HepG2 (cell line): ENCODE measurements at regions of chr5 and their contacts with region 1.

Region 1: DNA sequence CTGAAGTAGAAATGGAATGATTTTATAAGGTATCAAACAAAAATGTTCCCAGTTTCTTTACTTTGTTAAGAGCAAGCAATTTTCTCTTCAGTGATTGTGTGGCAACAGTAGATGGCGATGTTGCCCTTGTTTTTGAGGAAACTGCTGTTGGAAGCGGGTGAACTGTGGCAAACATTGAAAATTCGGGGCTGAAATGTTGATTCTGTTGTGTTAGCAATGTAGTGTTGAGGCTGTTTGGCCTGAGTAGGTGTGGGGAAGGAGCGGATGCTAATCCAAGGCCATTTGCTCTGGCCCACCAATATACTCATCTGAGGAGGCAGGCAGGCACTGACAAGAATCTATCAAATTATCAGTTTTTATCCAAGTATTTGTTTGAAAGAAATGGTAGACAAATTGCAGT is 129.8 kb downstream of the SLC12A2 start:
- DNase-seq: peak; percentile 39
- ATAC-seq: peak; percentile 67
- H3K4me3 ChIP-seq: no peak overlapping the region
- H3K27ac ChIP-seq: no peak overlapping the region
- H3K4me1 ChIP-seq: peaks cover 14% of the 10 kb centered on the region
- H3K27me3 ChIP-seq: peaks cover 0 to 6% of the 10 kb centered on the region in 2 experiments; a peak in 2 of 5 replicates
- CTCF ChIP-seq: peak; percentile 82
- EP300 ChIP-seq: no peak
- POLR2A ChIP-seq: no peak
- RAD21 ChIP-seq: peak; percentile 62; the same call in 1 of the 2 replicates

Region 2: GRCh38 chr5:127536687-127537086 is 676.7 kb before region 1 on chr5:
- CTCF ChIA-PET with region 1: no interaction called
- POLR2A ChIA-PET with region 1: no interaction called
- in situ Hi-C with region 1: no loop called
- intact Hi-C with region 1: no loop called
- DNase-seq: no peak
- ATAC-seq: no peak
- H3K4me3 ChIP-seq: no peak overlapping the region
- H3K27ac ChIP-seq: no peak overlapping the region
- H3K4me1 ChIP-seq: no peaks in the 10 kb centered on the region
- H3K27me3 ChIP-seq: no peaks in the 10 kb centered on the region
- CTCF ChIP-seq: no peak
- EP300 ChIP-seq: no peak
- POLR2A ChIP-seq: no peak
- RAD21 ChIP-seq: no peak

Region 3: GRCh38 chr5:128228008-128228407 is 14.7 kb after region 1 on chr5:
- CTCF ChIA-PET with region 1: no interaction called
- POLR2A ChIA-PET with region 1: no interaction called
- in situ Hi-C with region 1: no loop called
- intact Hi-C with region 1: no loop called
- DNase-seq: no peak
- ATAC-seq: no peak
- H3K4me3 ChIP-seq: no peak overlapping the region
- H3K27ac ChIP-seq: no peak overlapping the region
- H3K4me1 ChIP-seq: no peaks in the 10 kb centered on the region
- H3K27me3 ChIP-seq: no peaks in the 10 kb centered on the region
- CTCF ChIP-seq: no peak
- EP300 ChIP-seq: no peak
- POLR2A ChIP-seq: no peak
- RAD21 ChIP-seq: no peak

Region 4: GRCh38 chr5:128362370-128362769 is 149.0 kb after region 1 on chr5:
- CTCF ChIA-PET with region 1: no interaction called
- POLR2A ChIA-PET with region 1: no interaction called
- in situ Hi-C with region 1: no loop called
- intact Hi-C with region 1: no loop called
- DNase-seq: no peak
- ATAC-seq: no peak
- H3K4me3 ChIP-seq: no peak overlapping the region
- H3K27ac ChIP-seq: no peak overlapping the region
- H3K4me1 ChIP-seq: 0 out of 2 replicates have a peak, but pooled peaks cover 7% of the 10 kb centered on the region
- H3K27me3 ChIP-seq: no peaks in the 10 kb centered on the region
- CTCF ChIP-seq: no peak
- EP300 ChIP-seq: no peak
- POLR2A ChIP-seq: no peak
- RAD21 ChIP-seq: no peak

Region 5: GRCh38 chr5:128498844-128499455 is 285.6 kb after region 1 on chr5:
- CTCF ChIA-PET with region 1: interaction called, 12 read pairs
- POLR2A ChIA-PET with region 1: no interaction called
- in situ Hi-C with region 1: loop called (anchors 5 kb)
- intact Hi-C with region 1: loop called (anchors 1 kb)
- DNase-seq: no peak
- ATAC-seq: no peak
- H3K4me3 ChIP-seq: no peak overlapping the region
- H3K27ac ChIP-seq: no peak overlapping the region
- H3K4me1 ChIP-seq: no peaks in the 10 kb centered on the region
- H3K27me3 ChIP-seq: no peaks in the 10 kb centered on the region
- CTCF ChIP-seq: peak; percentile 22; the same call in 1 of the 2 replicates
- EP300 ChIP-seq: no peak
- POLR2A ChIP-seq: no peak
- RAD21 ChIP-seq: no peak

Region 6: DNA sequence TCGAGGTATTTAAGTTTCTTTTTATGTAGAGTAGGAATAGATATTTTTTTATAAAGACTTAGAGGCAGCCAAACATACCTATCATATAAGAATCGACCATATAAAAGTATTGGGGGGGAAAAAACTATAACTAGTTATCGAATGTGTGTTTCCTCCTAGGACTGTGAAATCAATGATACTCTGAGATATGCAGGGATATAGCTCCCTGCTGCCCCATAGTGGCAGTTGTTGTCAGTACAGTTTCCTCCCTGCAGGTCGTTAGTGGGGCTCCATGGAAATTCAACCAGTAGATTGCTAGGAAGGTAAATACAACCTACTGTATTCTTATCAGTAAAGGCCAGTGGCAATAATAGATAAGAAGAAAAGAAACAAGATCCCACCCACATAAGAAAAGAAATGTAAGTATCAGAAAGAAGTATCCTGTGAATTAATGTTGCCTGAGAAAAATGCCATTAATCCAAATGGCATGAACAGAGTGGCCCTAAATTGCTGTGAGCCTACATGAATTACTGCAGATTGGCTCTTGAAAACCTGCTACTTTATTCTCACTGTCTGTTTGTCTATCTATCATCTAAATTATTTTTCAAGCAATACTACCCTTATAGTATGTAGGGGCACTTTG is 461.6 kb after region 1 on chr5:
- CTCF ChIA-PET with region 1: interaction called, 12 read pairs
- POLR2A ChIA-PET with region 1: no interaction called
- in situ Hi-C with region 1: loop called (anchors 10 kb)
- intact Hi-C with region 1: loop called (anchors 1 kb)
- DNase-seq: peak; percentile 14
- ATAC-seq: peak; percentile 88
- H3K4me3 ChIP-seq: no peak overlapping the region
- H3K27ac ChIP-seq: no peak overlapping the region
- H3K4me1 ChIP-seq: no peaks in the 10 kb centered on the region
- H3K27me3 ChIP-seq: no peaks in the 10 kb centered on the region
- CTCF ChIP-seq: peak; percentile 60
- EP300 ChIP-seq: no peak
- POLR2A ChIP-seq: no peak
- RAD21 ChIP-seq: no peak

Region 7: DNA sequence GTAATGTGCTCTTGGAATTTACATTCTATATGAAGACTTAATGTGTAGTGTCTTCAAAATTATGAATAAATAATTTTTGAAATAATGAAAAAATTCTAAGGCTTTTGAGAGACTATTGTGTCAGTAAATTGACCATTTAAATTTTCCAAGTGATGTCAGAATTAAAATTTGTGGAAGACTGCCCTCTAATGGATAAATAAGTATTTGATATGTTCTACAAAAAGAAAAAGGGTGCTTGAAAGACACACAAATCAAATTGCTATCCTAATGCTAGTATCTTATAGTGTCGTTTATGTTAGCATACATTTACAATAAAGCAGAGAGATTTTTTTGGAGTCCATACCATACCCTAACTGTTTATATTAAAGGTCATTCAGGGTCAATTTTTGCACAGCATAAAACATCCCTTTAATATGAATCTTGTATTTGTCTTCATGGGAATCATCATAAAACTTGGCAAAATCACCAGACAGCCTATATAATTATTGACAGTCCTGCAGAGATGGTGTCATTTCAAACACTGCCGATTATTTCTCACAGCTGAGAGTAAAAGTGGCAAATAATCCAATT is 631.1 kb after region 1 on chr5:
- CTCF ChIA-PET with region 1: no interaction called
- POLR2A ChIA-PET with region 1: no interaction called
- in situ Hi-C with region 1: loop called (anchors 25 kb)
- intact Hi-C with region 1: loop called (anchors 5 kb)
- DNase-seq: no peak
- ATAC-seq: no peak
- H3K4me3 ChIP-seq: no peak overlapping the region
- H3K27ac ChIP-seq: no peak overlapping the region
- H3K4me1 ChIP-seq: no peaks in the 10 kb centered on the region
- H3K27me3 ChIP-seq: no peaks in the 10 kb centered on the region
- CTCF ChIP-seq: no peak
- EP300 ChIP-seq: no peak
- POLR2A ChIP-seq: no peak
- RAD21 ChIP-seq: no peak

Region 8: DNA sequence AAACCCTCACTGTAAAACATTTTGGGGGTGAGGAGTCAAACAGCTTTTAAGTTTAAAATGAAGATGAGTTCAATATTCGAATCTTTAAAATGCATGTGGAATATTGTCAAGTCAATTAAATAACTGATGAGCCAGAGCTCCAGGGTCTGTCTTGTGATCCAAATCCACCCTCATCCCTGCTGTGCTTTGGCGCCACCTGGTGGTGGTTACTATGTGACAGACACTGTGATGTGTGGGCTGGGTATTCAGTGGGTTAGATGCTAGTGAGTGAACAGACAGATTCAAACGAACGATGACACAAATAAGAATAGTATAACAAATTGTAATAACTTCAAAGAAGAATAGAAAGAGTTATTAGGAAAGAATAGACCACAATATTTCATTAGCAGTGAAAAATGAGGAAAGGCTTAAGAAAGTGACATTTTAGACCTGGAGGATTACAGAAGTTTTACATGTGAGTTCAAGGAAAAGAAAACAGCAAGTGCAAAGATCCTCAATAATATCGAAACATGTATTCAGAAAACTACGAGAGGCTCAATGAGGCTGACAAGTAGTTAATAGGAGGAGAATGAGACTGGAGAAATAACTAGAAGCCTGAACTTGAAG is 1639.5 kb after region 1 on chr5:
- CTCF ChIA-PET with region 1: no interaction called
- POLR2A ChIA-PET with region 1: no interaction called
- in situ Hi-C with region 1: no loop called
- intact Hi-C with region 1: loop called (anchors 5 kb)
- DNase-seq: peak; percentile 56
- ATAC-seq: peak; percentile 99
- H3K4me3 ChIP-seq: no peak overlapping the region
- H3K27ac ChIP-seq: no peak overlapping the region
- H3K4me1 ChIP-seq: no peaks in the 10 kb centered on the region
- H3K27me3 ChIP-seq: no peaks in the 10 kb centered on the region
- CTCF ChIP-seq: peak; percentile 86
- EP300 ChIP-seq: no peak
- POLR2A ChIP-seq: no peak
- RAD21 ChIP-seq: peak; percentile 52